B cell (primary cell): ENCODE measurements at regions of chr3 and their contacts with region 1.

Region 1: GRCh38 chr3:141875374-141875892 is 1.0 kb upstream of the ATP1B3 start:
- DNase-seq: peak; percentile 87
- ATAC-seq: peak; percentile 63
- H3K4me3 ChIP-seq: peak overlapping the region; percentile 74 to 89 (median 79)
- H3K4me3 Mint-ChIP-seq: peak overlapping the region; percentile 90
- H3K27ac ChIP-seq: peak overlapping the region; percentile 90 to 98
- H3K27ac Mint-ChIP-seq: peak overlapping the region; percentile 90
- H3K4me1 ChIP-seq: peaks cover 8 to 15% of the 10 kb centered on the region in 2 donors
- H3K4me1 Mint-ChIP-seq: peaks cover 28% of the 10 kb centered on the region
- H3K27me3 ChIP-seq: no peaks in the 10 kb centered on the region
- H3K27me3 Mint-ChIP-seq: no peaks in the 10 kb centered on the region
- CTCF ChIP-seq: peak; percentile 90

Region 2: DNA sequence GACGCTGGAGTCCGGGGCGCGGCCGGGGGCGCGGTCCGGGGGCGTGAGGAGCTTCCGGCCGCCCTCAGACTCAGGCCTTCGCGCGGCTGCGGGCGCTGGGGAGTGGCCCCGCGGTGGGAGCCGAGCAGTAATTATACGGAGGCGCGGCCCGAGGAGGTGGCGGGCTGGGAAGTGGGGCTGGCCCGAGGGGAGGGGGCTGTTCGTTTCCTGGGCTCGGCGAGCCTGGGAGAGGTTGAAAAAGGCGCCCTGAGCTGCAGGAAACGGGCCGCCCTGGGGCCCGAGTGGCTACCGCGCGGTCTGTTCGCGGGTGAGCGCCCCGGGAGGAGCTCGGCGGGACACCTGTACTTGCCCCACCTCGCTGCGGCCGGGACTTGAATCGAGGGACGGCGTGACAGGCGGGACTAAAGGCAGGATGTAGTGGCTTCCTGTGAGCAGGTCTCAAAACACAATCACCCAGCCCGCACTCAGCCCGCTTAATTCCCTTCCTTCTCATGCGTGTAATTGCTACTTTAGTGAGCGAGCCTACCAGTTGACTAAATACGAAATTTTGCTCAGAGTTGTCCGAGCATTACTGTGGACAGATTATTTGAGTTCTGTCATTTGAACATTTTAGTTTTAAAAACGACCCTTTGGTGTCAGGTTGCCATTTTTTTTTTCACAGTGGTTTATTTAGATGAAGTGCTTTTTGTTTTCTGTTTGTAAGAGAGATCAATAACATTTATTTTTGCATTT is 387.7 kb before region 1 on chr3:
- CTCF ChIA-PET with region 1: no interaction called
- POLR2A ChIA-PET with region 1: no interaction called
- intact Hi-C with region 1: loop called (anchors 2 kb)
- DNase-seq: peak; percentile 91
- ATAC-seq: peak; percentile 70
- H3K4me3 ChIP-seq: peak overlapping the region; percentile 48 to 96 (median 67)
- H3K4me3 Mint-ChIP-seq: peak overlapping the region; percentile 88
- H3K27ac ChIP-seq: peak overlapping the region; percentile 83 to 91
- H3K27ac Mint-ChIP-seq: peak overlapping the region; percentile 93
- H3K4me1 ChIP-seq: peaks cover 45 to 66% of the 10 kb centered on the region in 2 donors
- H3K4me1 Mint-ChIP-seq: peaks cover 70% of the 10 kb centered on the region
- H3K27me3 ChIP-seq: no peaks in the 10 kb centered on the region
- H3K27me3 Mint-ChIP-seq: no peaks in the 10 kb centered on the region
- CTCF ChIP-seq: no peak

Region 3: DNA sequence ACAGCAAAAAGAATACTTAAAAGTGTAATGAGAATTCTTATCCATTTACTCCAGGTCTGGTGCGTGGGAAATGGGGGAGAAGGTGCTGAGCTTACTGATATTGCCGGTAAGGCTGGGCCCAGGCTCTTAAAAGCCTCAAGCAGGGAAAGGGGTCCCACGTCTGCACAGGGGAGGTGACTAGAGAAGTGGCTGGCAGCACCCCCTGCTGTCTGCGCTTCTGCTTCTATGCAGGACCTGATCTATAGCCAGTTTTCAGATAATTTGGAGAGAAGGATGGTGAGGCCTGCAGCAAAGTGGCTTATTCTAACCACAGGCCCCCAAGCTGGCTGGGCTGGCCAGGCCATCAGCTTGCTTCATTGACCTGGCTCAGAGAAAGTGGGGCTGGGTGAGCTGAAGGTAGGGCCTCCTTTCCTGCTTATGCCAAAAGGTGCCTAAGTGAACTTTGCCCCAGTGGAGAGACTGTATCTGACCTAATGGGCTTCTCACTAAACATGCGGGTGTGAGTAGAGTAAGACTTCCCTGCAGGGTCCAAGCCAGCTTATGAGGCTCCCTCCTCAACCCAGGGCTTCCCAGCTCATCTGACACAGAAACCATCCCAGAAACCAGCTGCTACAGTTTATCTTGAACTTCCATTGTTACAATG is 29.9 kb before region 1 on chr3:
- CTCF ChIA-PET with region 1: no interaction called
- POLR2A ChIA-PET with region 1: no interaction called
- intact Hi-C with region 1: no loop called
- DNase-seq: peak; percentile 5
- ATAC-seq: no peak
- H3K4me3 ChIP-seq: no peak overlapping the region
- H3K4me3 Mint-ChIP-seq: no peak overlapping the region
- H3K27ac ChIP-seq: no peak overlapping the region
- H3K27ac Mint-ChIP-seq: no peak overlapping the region
- H3K4me1 ChIP-seq: no peaks in the 10 kb centered on the region
- H3K4me1 Mint-ChIP-seq: no peaks in the 10 kb centered on the region
- H3K27me3 ChIP-seq: no peaks in the 10 kb centered on the region
- H3K27me3 Mint-ChIP-seq: peaks cover 11% of the 10 kb centered on the region
- CTCF ChIP-seq: no peak

Region 4: DNA sequence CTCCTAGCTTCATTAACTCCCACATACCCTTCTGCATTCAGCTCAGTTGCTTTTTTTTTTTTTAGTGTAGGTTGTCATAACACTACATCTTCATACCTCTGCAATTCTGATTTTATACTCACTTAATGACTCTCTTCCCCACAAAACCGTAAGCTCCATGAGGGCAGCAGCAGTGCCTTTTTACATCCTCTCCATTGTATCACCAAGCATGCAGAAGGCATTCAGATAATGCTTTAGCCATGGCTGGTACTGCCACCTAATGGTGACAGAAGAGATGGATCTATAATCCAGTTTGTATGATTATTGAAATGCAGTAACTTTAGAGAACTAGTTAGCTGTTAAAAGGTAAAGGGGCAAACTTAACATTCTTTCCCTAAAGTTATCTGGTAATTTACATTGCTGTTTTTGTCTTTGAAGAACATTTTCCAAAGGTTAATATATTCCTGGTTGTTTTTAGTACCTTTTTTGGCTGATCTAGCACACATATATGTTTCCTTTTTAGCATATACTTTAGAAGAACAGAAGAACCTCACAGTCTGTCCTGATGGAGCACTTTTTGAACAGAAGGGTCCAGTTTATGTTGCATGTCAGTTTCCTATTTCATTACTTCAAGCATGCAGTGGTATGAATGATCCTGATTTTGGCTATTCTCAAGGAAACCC is 37.8 kb after region 1 on chr3:
- CTCF ChIA-PET with region 1: interaction called, 13 read pairs
- POLR2A ChIA-PET with region 1: interaction called, 4 read pairs
- intact Hi-C with region 1: loop called (anchors 5 kb)
- DNase-seq: peak; percentile 65
- ATAC-seq: peak; percentile 70
- H3K4me3 ChIP-seq: no peak overlapping the region
- H3K4me3 Mint-ChIP-seq: no peak overlapping the region
- H3K27ac ChIP-seq: no peak overlapping the region
- H3K27ac Mint-ChIP-seq: no peak overlapping the region
- H3K4me1 ChIP-seq: no peaks in the 10 kb centered on the region
- H3K4me1 Mint-ChIP-seq: no peaks in the 10 kb centered on the region
- H3K27me3 ChIP-seq: no peaks in the 10 kb centered on the region
- H3K27me3 Mint-ChIP-seq: no peaks in the 10 kb centered on the region
- CTCF ChIP-seq: peak; percentile 78

Region 5: GRCh38 chr3:142148792-142149672 is 273.6 kb after region 1 on chr3 and contains the start of gene TFDP2:
- CTCF ChIA-PET with region 1: no interaction called
- POLR2A ChIA-PET with region 1: no interaction called
- intact Hi-C with region 1: loop called (anchors 2 kb)
- DNase-seq: peak; percentile 88
- ATAC-seq: peak; percentile 98
- H3K4me3 ChIP-seq: peak within 1 kb of the TSS; percentile 56 to 85 (median 74)
- H3K4me3 Mint-ChIP-seq: peak within 1 kb of the TSS; percentile 88
- H3K27ac ChIP-seq: peak within 1 kb of the TSS in 1 of 2 donors; percentile 76
- H3K27ac Mint-ChIP-seq: peak within 1 kb of the TSS; percentile 87
- H3K4me1 ChIP-seq: peaks cover 7 to 15% of the 10 kb centered on the region in 2 donors
- H3K4me1 Mint-ChIP-seq: peaks cover 19% of the 10 kb centered on the region
- H3K27me3 ChIP-seq: no peaks in the 10 kb centered on the region
- H3K27me3 Mint-ChIP-seq: no peaks in the 10 kb centered on the region
- CTCF ChIP-seq: no peak
- total RNA-seq, gene TFDP2: 31.7 and 32.9 TPM in 2 replicates

Region 6: GRCh38 chr3:142447852-142448823 is 572.7 kb after region 1 on chr3 and contains the start of gene XRN1:
- CTCF ChIA-PET with region 1: no interaction called
- POLR2A ChIA-PET with region 1: no interaction called
- intact Hi-C with region 1: loop called (anchors 5 kb)
- DNase-seq: peak; percentile 94
- ATAC-seq: peak; percentile 98
- H3K4me3 ChIP-seq: peak within 1 kb of the TSS; percentile 85 to 100 (median 98)
- H3K4me3 Mint-ChIP-seq: peak within 1 kb of the TSS; percentile 99
- H3K27ac ChIP-seq: peak within 1 kb of the TSS; percentile 97 to 100
- H3K27ac Mint-ChIP-seq: peak within 1 kb of the TSS; percentile 100
- H3K4me1 ChIP-seq: peaks cover 18 to 24% of the 10 kb centered on the region in 2 donors
- H3K4me1 Mint-ChIP-seq: peaks cover 41% of the 10 kb centered on the region
- H3K27me3 ChIP-seq: no peaks in the 10 kb centered on the region
- H3K27me3 Mint-ChIP-seq: no peaks in the 10 kb centered on the region
- CTCF ChIP-seq: no peak
- total RNA-seq, gene XRN1: 78.6 and 91.8 TPM in 2 replicates